ENCODE measurements at regions of chr4 and their contacts with region 1.

Region 1: DNA sequence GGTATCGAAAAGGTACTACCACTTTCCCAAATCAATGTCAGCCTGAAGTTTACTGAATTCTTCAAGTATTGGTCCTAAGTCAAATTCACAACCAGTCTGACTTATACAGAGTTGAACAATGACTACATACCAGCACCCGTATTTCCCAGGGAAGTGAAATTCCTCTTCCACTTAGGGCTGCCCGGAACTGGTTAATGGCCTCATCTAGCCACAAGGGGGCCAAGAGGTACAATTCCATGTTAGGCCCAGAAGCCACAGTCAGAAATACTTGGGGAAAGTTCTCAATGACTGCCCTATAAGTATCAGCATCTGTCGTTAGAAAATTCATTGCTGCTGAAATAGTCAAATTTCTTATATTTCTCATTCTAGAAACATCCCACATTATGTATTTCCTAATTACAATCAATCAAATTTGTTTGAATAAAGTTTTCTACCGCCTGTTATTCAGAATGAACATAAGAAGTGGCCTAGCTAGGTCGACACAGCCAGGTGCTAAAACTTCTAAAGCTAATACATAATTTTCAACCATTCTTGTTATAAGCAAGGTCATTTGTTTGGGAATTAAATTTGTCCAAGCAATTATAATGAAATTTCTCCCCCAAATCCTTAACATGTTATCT is 5.7 kb upstream of the PCDH7 start:
- DNase-seq: peak; percentile 65
- H3K4me3 ChIP-seq: no peak overlapping the region
- H3K27ac ChIP-seq: no peak overlapping the region
- H3K4me1 ChIP-seq: peaks cover 13% of the 10 kb centered on the region
- H3K27me3 ChIP-seq: no peaks in the 10 kb centered on the region
- CTCF ChIP-seq: peak; percentile 79
- POLR2A ChIP-seq: no peak

Region 2: GRCh38 chr4:30116401-30116800 is 598.1 kb before region 1 on chr4:
- CTCF ChIA-PET with region 1: no interaction called
- POLR2A ChIA-PET with region 1: no interaction called
- dilution Hi-C with region 1: no loop called
- intact Hi-C with region 1: no loop called
- DNase-seq: no peak
- H3K4me3 ChIP-seq: no peak overlapping the region
- H3K27ac ChIP-seq: no peak overlapping the region
- H3K4me1 ChIP-seq: no peaks in the 10 kb centered on the region
- H3K27me3 ChIP-seq: no peaks in the 10 kb centered on the region
- CTCF ChIP-seq: no peak
- POLR2A ChIP-seq: no peak

Region 3: GRCh38 chr4:30380404-30380998 is 334.0 kb before region 1 on chr4:
- CTCF ChIA-PET with region 1: interaction called, 26 read pairs
- POLR2A ChIA-PET with region 1: no interaction called
- dilution Hi-C with region 1: no loop called
- intact Hi-C with region 1: loop called (anchors 1 kb)
- DNase-seq: peak; percentile 76
- H3K4me3 ChIP-seq: no peak overlapping the region
- H3K27ac ChIP-seq: no peak overlapping the region
- H3K4me1 ChIP-seq: peaks cover 6% of the 10 kb centered on the region
- H3K27me3 ChIP-seq: no peaks in the 10 kb centered on the region
- CTCF ChIP-seq: peak; percentile 90 to 93
- POLR2A ChIP-seq: no peak

Region 4: GRCh38 chr4:30789219-30789671 is 74.7 kb after region 1 on chr4:
- CTCF ChIA-PET with region 1: no interaction called
- POLR2A ChIA-PET with region 1: no interaction called
- dilution Hi-C with region 1: no loop called
- intact Hi-C with region 1: loop called (anchors 2 kb)
- DNase-seq: peak; percentile 45
- H3K4me3 ChIP-seq: no peak overlapping the region
- H3K27ac ChIP-seq: no peak overlapping the region
- H3K4me1 ChIP-seq: no peaks in the 10 kb centered on the region
- H3K27me3 ChIP-seq: no peaks in the 10 kb centered on the region
- CTCF ChIP-seq: no peak
- POLR2A ChIP-seq: no peak

Region 5: GRCh38 chr4:31045724-31046318 is 331.3 kb after region 1 on chr4:
- CTCF ChIA-PET with region 1: interaction called, 12 read pairs
- POLR2A ChIA-PET with region 1: no interaction called
- dilution Hi-C with region 1: no loop called
- intact Hi-C with region 1: loop called (anchors 2 kb)
- DNase-seq: peak; percentile 74
- H3K4me3 ChIP-seq: no peak overlapping the region
- H3K27ac ChIP-seq: no peak overlapping the region
- H3K4me1 ChIP-seq: no peaks in the 10 kb centered on the region
- H3K27me3 ChIP-seq: no peaks in the 10 kb centered on the region
- CTCF ChIP-seq: peak; percentile 40 to 49
- POLR2A ChIP-seq: no peak

Region 6: GRCh38 chr4:31370866-31371465 is 656.4 kb after region 1 on chr4:
- CTCF ChIA-PET with region 1: interaction called, 6 read pairs
- POLR2A ChIA-PET with region 1: no interaction called
- dilution Hi-C with region 1: no loop called
- intact Hi-C with region 1: loop called (anchors 1 kb)
- DNase-seq: peak; percentile 60
- H3K4me3 ChIP-seq: no peak overlapping the region
- H3K27ac ChIP-seq: no peak overlapping the region
- H3K4me1 ChIP-seq: no peaks in the 10 kb centered on the region
- H3K27me3 ChIP-seq: no peaks in the 10 kb centered on the region
- CTCF ChIP-seq: peak; percentile 53 to 62
- POLR2A ChIP-seq: no peak

Region 7: GRCh38 chr4:32196928-32197688 is 1482.6 kb after region 1 on chr4:
- CTCF ChIA-PET with region 1: no interaction called
- POLR2A ChIA-PET with region 1: no interaction called
- dilution Hi-C with region 1: no loop called
- intact Hi-C with region 1: loop called (anchors 5 kb)
- DNase-seq: no peak
- H3K4me3 ChIP-seq: peak overlapping the region in 1 of 3 experiments; percentile 6
- H3K27ac ChIP-seq: peak overlapping the region; percentile 29
- H3K4me1 ChIP-seq: peaks cover 5% of the 10 kb centered on the region
- H3K27me3 ChIP-seq: no peaks in the 10 kb centered on the region
- CTCF ChIP-seq: no peak
- POLR2A ChIP-seq: no peak